ENCODE measurements at regions of chr3 and their contacts with region 1.

Region 1: DNA sequence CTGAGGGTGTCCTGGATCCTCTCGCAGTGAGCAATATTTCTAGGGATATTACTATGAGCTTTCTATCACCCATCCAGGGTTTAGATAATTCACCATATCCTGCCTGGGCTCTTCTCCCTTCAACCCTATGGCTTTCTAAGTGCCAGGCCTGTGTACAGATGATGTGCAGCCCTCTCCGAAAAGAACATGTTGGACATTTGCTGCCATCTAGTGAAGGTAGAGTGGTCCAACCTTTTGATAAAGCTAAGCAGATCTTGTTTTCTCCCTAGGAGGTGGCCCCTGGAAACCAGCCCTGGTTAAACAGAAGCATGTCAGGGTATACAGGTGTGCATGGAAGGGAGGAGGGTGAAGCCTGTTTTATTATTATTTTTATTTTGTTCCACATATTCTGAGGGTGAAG is 27.9 kb upstream of the SCN10A start:
- DNase-seq: no peak
- ATAC-seq: peak; percentile 71 to 84

Region 2: DNA sequence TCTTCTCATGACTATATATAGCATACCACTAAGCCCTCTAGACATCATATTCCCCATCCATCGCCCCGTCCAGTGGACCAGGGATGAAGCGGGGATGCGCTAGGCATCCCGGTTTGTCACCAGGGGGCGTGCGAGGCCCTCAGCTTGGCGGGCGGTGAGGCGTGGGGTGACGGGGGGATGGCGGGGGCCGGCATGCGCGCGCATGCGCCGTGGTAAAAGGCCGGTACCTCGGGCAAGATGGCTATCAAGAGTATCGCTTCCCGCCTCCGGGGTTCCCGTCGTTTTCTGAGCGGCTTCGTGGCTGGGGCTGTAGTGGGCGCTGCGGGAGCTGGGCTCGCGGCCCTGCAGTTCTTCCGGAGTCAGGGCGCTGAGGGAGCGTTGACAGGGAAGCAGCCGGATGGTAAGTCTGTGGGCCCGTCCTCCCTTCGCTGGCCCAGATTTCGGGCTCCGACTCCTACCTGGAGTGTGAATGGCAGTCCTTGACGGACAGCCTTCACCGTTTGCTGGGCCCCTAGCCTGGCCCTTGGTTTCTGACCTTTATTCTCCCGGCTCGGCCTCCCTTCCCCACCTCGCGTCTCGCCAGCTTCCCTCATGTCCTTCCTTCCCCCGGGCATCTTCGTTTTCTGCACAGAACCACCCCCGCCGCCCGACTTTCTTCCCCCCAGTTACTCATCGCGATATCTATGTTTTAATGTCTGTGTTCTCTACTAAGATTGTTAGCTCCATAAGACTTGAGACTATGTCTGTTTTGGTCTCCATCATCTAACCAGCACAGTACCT is 347.6 kb before region 1 on chr3 and contains the start of gene EXOG:
- intact Hi-C with region 1: loop called in 1 of 2 experiments (anchors 10 kb)
- DNase-seq: peak; percentile 95
- ATAC-seq: peak; percentile 97
- total RNA-seq, gene EXOG: 17.8 to 20.5 TPM

Region 3: GRCh38 chr3:38521391-38521987 is 322.4 kb before region 1 on chr3:
- intact Hi-C with region 1: loop called in 1 of 2 experiments (anchors 10 kb)
- DNase-seq: peak; percentile 49
- ATAC-seq: peak; percentile 65 to 72

Region 4: GRCh38 chr3:38689774-38690173 is 154.1 kb before region 1 on chr3:
- intact Hi-C with region 1: loop called (anchors 10 kb)
- DNase-seq: no peak
- ATAC-seq: no peak

Region 5: GRCh38 chr3:38890426-38890825 is 46.5 kb after region 1 on chr3:
- intact Hi-C with region 1: no loop called
- DNase-seq: no peak
- ATAC-seq: no peak

Measured in left cardiac atrium (tissue), 4 donors.